PC-3 (cell line): ENCODE measurements at regions of chr3 and their contacts with region 1.

Region 1: GRCh38 chr3:172646439-172647015 is 64.3 kb downstream of the NCEH1 start:
- DNase-seq: peak; percentile 41
- ATAC-seq: no peak
- H3K4me3 ChIP-seq: no peak overlapping the region
- H3K27ac ChIP-seq: no peak overlapping the region
- H3K4me1 ChIP-seq: peaks cover 22% of the 10 kb centered on the region
- H3K27me3 ChIP-seq: no peaks in the 10 kb centered on the region
- CTCF ChIP-seq: no peak

Region 2: GRCh38 chr3:172622916-172623700 is 23.4 kb before region 1 on chr3:
- CTCF ChIA-PET with region 1: interaction called, 12 read pairs
- POLR2A ChIA-PET with region 1: interaction called, 8 read pairs
- intact Hi-C with region 1: no loop called
- DNase-seq: peak; percentile 78
- ATAC-seq: peak; percentile 73
- H3K4me3 ChIP-seq: peak overlapping the region; percentile 70
- H3K27ac ChIP-seq: peak overlapping the region; percentile 83
- H3K4me1 ChIP-seq: peaks cover 32% of the 10 kb centered on the region
- H3K27me3 ChIP-seq: no peaks in the 10 kb centered on the region
- CTCF ChIP-seq: peak; percentile 76

Region 3: GRCh38 chr3:172776049-172776717 is 129.7 kb after region 1 on chr3:
- CTCF ChIA-PET with region 1: no interaction called
- POLR2A ChIA-PET with region 1: no interaction called
- intact Hi-C with region 1: no loop called
- DNase-seq: no peak
- ATAC-seq: no peak
- H3K4me3 ChIP-seq: no peak overlapping the region
- H3K27ac ChIP-seq: no peak overlapping the region
- H3K4me1 ChIP-seq: no peaks in the 10 kb centered on the region
- H3K27me3 ChIP-seq: no peaks in the 10 kb centered on the region
- CTCF ChIP-seq: no peak